Right ventricle myocardium inferior (tissue), 1 donor: ENCODE measurements at regions of chr14 and their contacts with region 1.

Region 1: DNA sequence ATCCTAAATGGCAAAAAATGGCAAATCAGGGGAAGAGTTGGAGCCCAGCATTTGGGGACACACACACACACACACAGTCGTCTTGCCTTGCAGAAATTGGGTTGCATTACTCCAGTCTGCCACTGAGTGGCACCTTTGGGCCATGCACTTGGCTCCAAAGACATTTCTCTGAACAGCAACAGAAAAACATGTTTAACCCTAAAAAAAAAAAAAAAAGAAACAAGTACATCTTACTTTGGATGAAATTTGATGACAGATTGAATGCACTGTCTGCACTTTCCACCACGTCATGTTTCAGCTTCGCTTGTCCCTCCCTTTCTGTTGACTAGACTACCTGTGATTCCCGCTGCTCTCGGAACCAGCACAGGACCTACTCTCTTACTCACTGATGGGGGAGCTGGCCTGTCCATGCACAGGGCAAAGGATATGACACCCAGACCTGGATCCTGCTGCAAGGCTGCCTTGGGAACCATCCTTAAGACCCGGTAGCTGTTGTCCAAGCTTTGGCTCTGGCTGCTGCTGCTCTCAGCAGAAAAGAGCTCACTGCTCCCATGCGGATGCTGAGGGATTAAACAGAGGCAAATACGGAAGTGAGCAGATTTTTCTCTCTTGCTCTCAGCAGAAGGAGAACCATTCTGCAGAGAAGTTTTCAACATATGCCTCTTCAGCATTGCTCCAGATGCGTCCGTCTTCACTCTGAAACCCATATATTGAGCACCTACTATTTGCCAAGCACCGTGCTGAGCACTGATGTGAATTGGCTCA is 376.8 kb downstream of the DPF3 start:
- DNase-seq: no peak
- ATAC-seq: peak; percentile 67

Region 2: GRCh38 chr14:72736314-72736715 is 219.2 kb after region 1 on chr14:
- intact Hi-C with region 1: no loop called
- DNase-seq: no peak
- ATAC-seq: no peak

Region 3: GRCh38 chr14:72904840-72905561 is 387.9 kb after region 1 on chr14:
- intact Hi-C with region 1: loop called (anchors 1 kb)
- DNase-seq: no peak
- ATAC-seq: peak; percentile 76

Region 4: DNA sequence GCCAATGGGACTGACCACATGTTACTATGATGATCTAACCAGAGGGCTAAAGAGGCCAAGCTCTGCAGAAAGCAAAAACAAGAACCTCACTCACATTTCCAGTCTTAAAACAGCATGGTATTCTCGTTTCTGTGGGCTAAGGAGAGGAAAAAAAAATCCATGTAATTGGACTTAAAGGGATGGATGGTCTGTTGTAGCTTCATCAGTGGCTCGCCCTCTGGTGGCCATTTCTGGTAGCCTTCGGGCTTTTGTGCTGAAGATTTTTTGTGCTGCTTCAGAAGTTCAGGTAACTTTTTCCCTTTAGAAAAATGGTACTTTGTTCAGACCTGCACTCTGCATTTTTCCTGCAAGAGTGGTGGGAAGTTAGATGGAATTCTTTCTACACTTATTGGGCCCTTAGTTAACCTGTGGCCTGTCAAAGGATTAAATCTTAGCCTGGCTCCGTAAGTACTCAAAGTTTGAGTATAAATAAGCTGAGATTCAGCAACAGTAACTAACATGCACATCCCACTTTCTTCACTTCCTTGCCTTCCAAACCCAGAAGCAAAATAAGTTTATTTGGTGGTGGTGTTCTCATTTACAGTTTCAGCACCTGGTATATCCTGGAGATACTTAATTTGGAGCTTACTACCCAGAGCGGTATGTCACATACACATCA is 431.5 kb after region 1 on chr14:
- intact Hi-C with region 1: loop called (anchors 2 kb)
- DNase-seq: no peak
- ATAC-seq: no peak